Endothelial cell of umbilical vein (primary cell): ENCODE measurements at regions of chr18 and their contacts with region 1.

Region 1: GRCh38 chr18:56083097-56083521 is 495.1 kb upstream of the TCF4 start:
- DNase-seq: peak; percentile 99
- H3K4me3 ChIP-seq: no peak overlapping the region
- H3K27ac ChIP-seq: peak overlapping the region; percentile 95
- H3K4me1 ChIP-seq: peaks cover 26% of the 10 kb centered on the region
- H3K27me3 ChIP-seq: no peaks in the 10 kb centered on the region
- CTCF ChIP-seq: peak; percentile 24 to 46
- POLR2A ChIP-seq: peak; percentile 71

Region 2: GRCh38 chr18:55096261-55096951 is 986.7 kb before region 1 on chr18:
- CTCF ChIA-PET with region 1: no interaction called
- POLR2A ChIA-PET with region 1: no interaction called
- dilution Hi-C with region 1: no loop called
- intact Hi-C with region 1: loop called (anchors 2 kb)
- DNase-seq: peak; percentile 64
- H3K4me3 ChIP-seq: no peak overlapping the region
- H3K27ac ChIP-seq: peak overlapping the region; percentile 80
- H3K4me1 ChIP-seq: peaks cover 39% of the 10 kb centered on the region
- H3K27me3 ChIP-seq: peaks cover 0 to 8% of the 10 kb centered on the region in 2 experiments
- CTCF ChIP-seq: peak; percentile 46 to 59
- POLR2A ChIP-seq: no peak

Region 3: DNA sequence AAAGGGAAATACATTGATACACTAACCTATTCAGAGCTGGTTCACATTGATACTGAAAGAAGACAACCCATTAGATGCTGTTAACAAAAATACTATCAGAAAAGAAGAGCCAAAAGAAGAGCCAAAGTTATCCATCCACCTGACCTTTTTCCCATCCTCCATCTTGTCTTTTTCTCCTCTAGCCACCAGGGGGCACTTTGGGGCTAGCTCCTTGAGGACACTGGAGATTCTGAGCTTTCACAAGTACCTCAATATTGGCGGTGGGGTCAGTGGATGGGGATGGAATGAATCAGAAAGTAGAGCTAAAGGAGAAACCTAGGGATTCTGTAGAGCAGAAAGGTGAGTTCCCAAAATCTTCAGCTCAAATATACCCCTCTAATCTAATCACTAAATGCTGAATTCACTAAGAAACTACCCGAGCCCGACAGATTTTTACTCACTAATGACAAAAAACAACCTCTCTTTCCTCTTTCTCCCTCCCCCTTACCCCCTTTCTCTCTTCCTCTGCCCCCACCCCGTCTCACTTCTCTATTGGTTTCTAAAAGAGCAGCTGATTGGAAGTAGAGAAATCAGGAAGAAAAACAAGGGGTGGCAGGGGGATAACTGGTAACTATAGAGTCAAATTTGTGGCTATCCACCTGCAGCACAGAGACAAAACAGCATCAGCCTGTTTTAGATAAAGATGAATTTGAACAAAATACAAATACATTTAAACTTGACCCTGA is 698.4 kb before region 1 on chr18:
- CTCF ChIA-PET with region 1: no interaction called
- POLR2A ChIA-PET with region 1: no interaction called
- dilution Hi-C with region 1: no loop called
- intact Hi-C with region 1: loop called (anchors 1 kb)
- DNase-seq: peak; percentile 67
- H3K4me3 ChIP-seq: no peak overlapping the region
- H3K27ac ChIP-seq: no peak overlapping the region
- H3K4me1 ChIP-seq: peaks cover 39% of the 10 kb centered on the region
- H3K27me3 ChIP-seq: no peaks in the 10 kb centered on the region
- CTCF ChIP-seq: peak; percentile 69 to 74
- POLR2A ChIP-seq: no peak

Region 4: DNA sequence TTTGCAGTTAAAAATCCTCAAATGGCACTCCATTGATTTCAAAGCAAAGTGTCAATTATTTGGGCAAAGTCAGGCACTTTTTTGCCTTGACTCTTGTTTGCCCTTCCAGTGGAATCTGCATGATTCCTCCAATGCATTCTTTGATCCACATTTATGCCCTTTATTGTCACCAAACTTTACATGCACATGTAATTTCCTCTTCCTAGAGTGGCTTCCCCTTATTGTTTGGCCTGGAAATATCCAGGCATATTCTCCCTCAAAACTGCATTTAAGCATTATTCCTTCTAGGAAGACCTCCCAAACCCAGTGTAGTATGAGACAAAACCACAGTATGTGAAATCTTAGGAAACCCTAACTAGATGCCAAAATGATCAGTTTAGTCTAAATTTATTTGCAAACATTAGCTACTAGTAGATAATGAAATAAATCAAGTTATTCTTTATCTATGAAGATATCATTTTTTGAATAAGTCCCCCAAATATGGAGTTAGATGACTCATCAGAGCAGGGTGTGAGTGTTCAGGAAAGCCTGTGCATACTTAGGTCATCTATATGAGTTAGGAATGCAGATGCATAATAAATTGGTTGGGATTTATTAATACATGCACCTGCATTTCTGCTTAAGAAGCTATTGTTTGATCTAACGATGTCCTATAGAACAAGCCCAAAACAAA is 61.8 kb before region 1 on chr18:
- CTCF ChIA-PET with region 1: interaction called, 11 read pairs
- POLR2A ChIA-PET with region 1: interaction called, 3 read pairs
- dilution Hi-C with region 1: no loop called
- intact Hi-C with region 1: loop called (anchors 1 kb)
- DNase-seq: peak; percentile 86
- H3K4me3 ChIP-seq: peak overlapping the region in 1 of 3 experiments; percentile 3
- H3K27ac ChIP-seq: peak overlapping the region; percentile 93
- H3K4me1 ChIP-seq: peaks cover 35% of the 10 kb centered on the region
- H3K27me3 ChIP-seq: no peaks in the 10 kb centered on the region
- CTCF ChIP-seq: no peak
- POLR2A ChIP-seq: no peak

Region 5: GRCh38 chr18:56389190-56389589 is 306.1 kb after region 1 on chr18:
- CTCF ChIA-PET with region 1: no interaction called
- POLR2A ChIA-PET with region 1: no interaction called
- dilution Hi-C with region 1: no loop called
- intact Hi-C with region 1: loop called (anchors 2 kb)
- DNase-seq: no peak
- H3K4me3 ChIP-seq: no peak overlapping the region
- H3K27ac ChIP-seq: no peak overlapping the region
- H3K4me1 ChIP-seq: peaks cover 13% of the 10 kb centered on the region
- H3K27me3 ChIP-seq: no peaks in the 10 kb centered on the region
- CTCF ChIP-seq: no peak
- POLR2A ChIP-seq: no peak